Activated T-helper 1 cell treated with anti-CD3 and anti-CD28 coated beads, Interleukin-12 subunit alpha, Interleukin-12 subunit beta, Interleukin-2, Interleukin-4 antibody, amounts not matched to agents 30 ng/mL and 10 ng/mL and 1 ng/mL, durations not matched to agents 14 hours and 24 hours and 36 hours (primary cell): ENCODE measurements at regions of chr6 and their contacts with region 1.

Region 1: GRCh38 chr6:169751242-169752073 is at the starts of genes DYNLT2 and ERMARD:
- DNase-seq: peak; percentile 93
- H3K4me3 Mint-ChIP-seq: peak within 1 kb of the TSS; percentile 99
- H3K27ac Mint-ChIP-seq: peak within 1 kb of the TSS; percentile 99
- H3K4me1 Mint-ChIP-seq: peaks cover 28% of the 10 kb centered on the region
- H3K27me3 Mint-ChIP-seq: peaks cover 4% of the 10 kb centered on the region
- total RNA-seq, gene DYNLT2: 2.2 and 2.6 TPM in 2 replicates
- total RNA-seq, gene ERMARD: 26.9 and 29.2 TPM in 2 replicates

Region 2: GRCh38 chr6:169212897-169213813 is 538.3 kb before region 1 on chr6:
- intact Hi-C with region 1: loop called (anchors 2 kb)
- DNase-seq: peak; percentile 87
- H3K4me3 Mint-ChIP-seq: peak overlapping the region; percentile 43
- H3K27ac Mint-ChIP-seq: peak overlapping the region; percentile 32
- H3K4me1 Mint-ChIP-seq: peaks cover 7% of the 10 kb centered on the region
- H3K27me3 Mint-ChIP-seq: peaks cover 5% of the 10 kb centered on the region

Region 3: DNA sequence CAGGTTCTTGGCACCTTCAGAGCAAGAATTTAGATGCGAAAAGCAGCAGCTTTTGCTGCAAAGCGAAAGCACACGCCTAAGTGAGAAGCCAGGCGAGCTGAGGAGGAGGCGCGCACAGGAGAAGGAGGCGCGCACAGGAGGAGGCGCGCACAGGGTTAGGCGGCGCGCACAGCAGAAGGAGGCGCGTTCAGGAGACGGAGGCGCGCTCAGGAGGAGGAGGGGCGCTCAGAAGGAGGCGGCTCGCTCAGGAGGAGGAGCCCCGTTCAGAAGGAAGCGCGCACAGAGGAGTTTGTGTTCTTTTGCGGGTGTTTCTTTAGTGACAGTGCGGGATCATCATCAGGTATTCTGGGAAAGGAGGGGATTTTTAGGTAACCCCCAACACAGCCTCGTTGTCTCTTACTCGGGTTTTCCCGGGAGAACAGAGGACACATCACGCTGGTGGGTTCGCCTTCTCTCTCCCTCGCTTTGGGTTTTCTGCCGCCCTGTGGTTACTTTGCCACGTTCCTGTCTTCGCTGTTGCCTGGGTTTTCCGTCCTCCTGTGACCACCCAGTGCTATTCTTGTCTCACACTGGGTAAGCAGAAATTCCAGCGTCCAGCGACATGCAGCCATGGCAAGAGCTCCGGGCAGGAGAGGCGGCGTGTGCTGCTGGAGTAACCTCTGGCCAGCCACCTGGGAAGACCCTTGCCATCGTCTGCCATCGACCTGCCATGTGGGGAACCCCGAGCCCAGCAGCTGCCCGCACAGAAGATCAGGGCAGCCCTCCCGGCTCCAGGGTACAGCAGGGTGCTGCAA is 96.7 kb before region 1 on chr6:
- intact Hi-C with region 1: loop called (anchors 1 kb)
- DNase-seq: peak; percentile 67
- H3K4me3 Mint-ChIP-seq: peak overlapping the region; percentile 87
- H3K27ac Mint-ChIP-seq: peak overlapping the region; percentile 44
- H3K4me1 Mint-ChIP-seq: no peaks in the 10 kb centered on the region
- H3K27me3 Mint-ChIP-seq: no peaks in the 10 kb centered on the region

Region 4: DNA sequence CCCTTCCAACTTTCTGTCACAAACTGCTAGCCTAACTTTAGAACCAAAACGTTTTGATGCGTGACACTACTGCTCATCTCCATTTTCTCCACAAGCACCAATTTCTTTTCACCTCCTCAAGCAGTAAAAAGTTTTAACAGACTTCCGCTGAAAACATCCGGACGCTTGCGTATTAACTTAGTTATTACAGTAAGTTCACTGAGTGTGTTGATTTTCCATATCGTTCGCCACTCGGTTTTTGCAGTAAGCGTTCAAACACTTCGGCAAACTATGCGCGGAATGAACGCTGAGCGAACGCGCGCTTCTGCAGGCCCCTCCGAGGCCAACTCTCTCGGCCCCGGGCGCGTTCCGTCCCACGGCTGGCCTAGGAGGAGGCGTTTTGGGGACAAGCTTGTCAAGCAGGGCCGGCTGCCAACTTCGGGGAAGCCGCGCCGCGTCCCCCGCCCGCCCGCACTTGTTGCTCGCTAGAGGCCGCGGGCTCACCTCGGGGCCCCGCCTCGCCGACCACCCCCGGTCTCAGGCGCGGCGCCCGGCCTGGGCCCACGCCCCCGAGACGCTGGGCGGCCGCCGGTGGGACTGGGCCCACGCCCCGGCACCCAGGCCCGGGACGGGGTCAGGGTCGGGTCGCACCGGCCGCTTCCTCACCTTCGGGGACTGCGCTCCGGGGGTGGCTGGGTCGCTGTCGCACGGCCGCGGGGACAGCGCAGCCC is 28.1 kb before region 1 on chr6:
- intact Hi-C with region 1: loop called (anchors 1 kb)
- DNase-seq: peak; percentile 49
- H3K4me3 Mint-ChIP-seq: peak overlapping the region; percentile 91
- H3K27ac Mint-ChIP-seq: peak overlapping the region; percentile 95
- H3K4me1 Mint-ChIP-seq: peaks cover 49% of the 10 kb centered on the region
- H3K27me3 Mint-ChIP-seq: peaks cover 8% of the 10 kb centered on the region

Region 5: GRCh38 chr6:169789982-169790927 is 38.8 kb after region 1 on chr6:
- intact Hi-C with region 1: loop called (anchors 1 kb)
- DNase-seq: peak; percentile 62
- H3K4me3 Mint-ChIP-seq: peak overlapping the region; percentile 84
- H3K27ac Mint-ChIP-seq: peak overlapping the region; percentile 34
- H3K4me1 Mint-ChIP-seq: peaks cover 22% of the 10 kb centered on the region
- H3K27me3 Mint-ChIP-seq: peaks cover 24% of the 10 kb centered on the region

Region 6: GRCh38 chr6:170388113-170388512 is 636.7 kb after region 1 on chr6:
- intact Hi-C with region 1: no loop called
- DNase-seq: no peak
- H3K4me3 Mint-ChIP-seq: no peak overlapping the region
- H3K27ac Mint-ChIP-seq: no peak overlapping the region
- H3K4me1 Mint-ChIP-seq: no peaks in the 10 kb centered on the region
- H3K27me3 Mint-ChIP-seq: no peaks in the 10 kb centered on the region

Region 7: DNA sequence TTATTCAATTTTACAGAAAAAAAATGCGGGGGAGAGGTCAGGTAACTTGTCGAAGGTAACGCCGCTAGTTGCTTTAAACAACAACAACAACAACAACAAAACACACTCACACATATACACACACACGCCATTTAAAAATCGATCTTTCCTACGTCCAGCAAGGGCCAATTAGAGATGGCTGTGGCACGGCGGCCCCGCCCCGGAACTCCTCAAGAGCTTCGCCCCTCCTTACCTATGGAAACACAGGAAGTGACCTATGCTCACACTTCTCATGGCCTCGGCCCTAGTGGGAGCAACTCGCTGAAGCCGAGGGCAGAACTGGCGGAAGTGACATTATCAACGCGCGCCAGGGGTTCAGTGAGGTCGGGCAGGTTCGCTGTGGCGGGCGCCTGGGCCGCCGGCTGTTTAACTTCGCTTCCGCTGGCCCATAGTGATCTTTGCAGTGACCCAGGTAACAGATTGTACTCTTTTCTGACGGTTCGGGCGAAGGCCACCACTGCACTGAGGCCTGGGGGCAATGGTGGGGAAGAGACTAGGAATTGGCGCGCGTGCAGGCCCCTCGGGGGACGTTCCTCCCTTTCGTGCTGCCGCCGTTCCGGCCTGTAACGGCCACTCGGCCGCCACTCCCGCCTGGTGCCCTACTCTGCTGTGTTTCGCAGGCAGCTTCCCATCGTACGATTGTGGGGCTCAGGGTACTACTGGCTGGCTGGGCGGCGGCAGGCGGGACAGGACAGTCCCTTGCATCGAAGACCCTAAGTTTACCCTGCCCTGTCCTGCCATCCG is 802.7 kb after region 1 on chr6 and contains the start of gene TBP:
- intact Hi-C with region 1: loop called (anchors 1 kb)
- DNase-seq: peak; percentile 96
- H3K4me3 Mint-ChIP-seq: no peak within 1 kb of the TSS
- H3K27ac Mint-ChIP-seq: no peak within 1 kb of the TSS
- H3K4me1 Mint-ChIP-seq: peaks cover 34% of the 10 kb centered on the region
- H3K27me3 Mint-ChIP-seq: no peaks in the 10 kb centered on the region
- total RNA-seq, gene TBP: 27.8 and 29.6 TPM in 2 replicates

Region 8: GRCh38 chr6:170584181-170584953 is 832.9 kb after region 1 on chr6 and contains the start of gene PDCD2:
- intact Hi-C with region 1: loop called (anchors 1 kb)
- DNase-seq: peak; percentile 91
- H3K4me3 Mint-ChIP-seq: peak within 1 kb of the TSS; percentile 99
- H3K27ac Mint-ChIP-seq: peak within 1 kb of the TSS; percentile 93
- H3K4me1 Mint-ChIP-seq: peaks cover 36% of the 10 kb centered on the region
- H3K27me3 Mint-ChIP-seq: no peaks in the 10 kb centered on the region
- total RNA-seq, gene PDCD2: 142 and 144 TPM in 2 replicates